ENCODE measurements at regions of chr12 and their contacts with region 1.

Region 1: GRCh38 chr12:124422570-124423523 is 128.0 kb downstream of the RFLNA start:
- DNase-seq: peak; percentile 96 to 97
- ATAC-seq: peak; percentile 91
- H3K4me3 ChIP-seq: no peak overlapping the region
- H3K27ac ChIP-seq: peak overlapping the region; percentile 71 to 98
- H3K4me1 ChIP-seq: no peaks in the 10 kb centered on the region
- H3K27me3 ChIP-seq: no peaks in the 10 kb centered on the region

Region 2: GRCh38 chr12:124379938-124380754 is 42.7 kb before region 1 on chr12:
- intact Hi-C with region 1: loop called (anchors 1 to 5 kb)
- DNase-seq: peak; percentile 93 to 96
- ATAC-seq: peak; percentile 86
- H3K4me3 ChIP-seq: no peak overlapping the region
- H3K27ac ChIP-seq: peak overlapping the region; percentile 10 to 85
- H3K4me1 ChIP-seq: no peaks in the 10 kb centered on the region
- H3K27me3 ChIP-seq: no peaks in the 10 kb centered on the region

Measured in aorta (tissue), 5 donors.